ENCODE measurements at regions of chr2 and their contacts with region 1.

Region 1: DNA sequence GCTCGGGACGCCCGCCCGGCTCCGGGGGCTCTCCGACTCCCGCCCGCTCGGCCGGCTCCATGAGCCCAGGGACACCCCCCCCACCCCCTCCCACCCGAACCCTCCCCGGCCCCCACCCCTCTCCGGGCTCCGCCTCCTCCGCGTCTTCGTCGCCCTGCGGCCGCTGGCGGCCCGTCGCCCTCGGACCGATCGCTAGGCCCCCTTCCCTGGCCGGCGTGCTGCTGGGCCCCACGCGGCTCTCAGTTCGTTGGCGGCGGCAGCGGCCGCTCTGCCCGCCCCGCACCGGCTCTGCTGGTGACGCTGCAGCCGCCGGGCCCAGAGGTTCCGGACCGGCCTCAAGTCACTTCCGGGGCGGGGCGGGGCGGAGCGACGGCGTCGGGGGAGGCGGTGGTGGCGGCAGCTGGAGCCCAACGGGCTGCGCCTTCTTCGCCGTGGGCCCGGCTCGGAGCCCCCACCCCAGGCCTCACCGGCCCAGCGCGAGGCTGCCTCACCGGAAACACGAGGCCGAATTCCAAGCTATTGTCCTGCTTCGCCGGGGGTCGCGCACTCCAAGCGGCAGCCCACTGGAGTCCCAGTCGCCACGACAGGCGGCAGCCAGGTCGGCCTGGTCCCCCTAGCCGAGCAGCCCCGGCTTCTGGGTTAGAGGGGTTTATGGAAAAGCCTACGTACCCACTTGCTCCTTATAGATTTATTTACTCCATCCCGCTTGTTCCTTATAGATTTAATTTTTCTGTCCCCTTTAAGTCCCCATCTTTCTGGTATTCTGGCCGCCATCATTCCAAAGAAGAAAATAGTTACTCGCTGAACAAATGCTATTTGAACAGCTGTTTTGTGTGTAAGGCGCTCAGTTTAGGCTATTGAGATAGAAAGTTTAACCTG is at the start of gene PSME4:
- DNase-seq: peak; percentile 88 to 97 (median 93)
- ATAC-seq: peak; percentile 90
- H3K4me3 ChIP-seq: peak within 1 kb of the TSS; percentile 78 to 99
- H3K4me3 Mint-ChIP-seq: peak within 1 kb of the TSS; percentile 95
- H3K27ac ChIP-seq: peak within 1 kb of the TSS; percentile 83 to 92
- H3K27ac Mint-ChIP-seq: peak within 1 kb of the TSS; percentile 98
- H3K4me1 ChIP-seq: peaks cover 25% of the 10 kb centered on the region
- H3K4me1 Mint-ChIP-seq: peaks cover 56% of the 10 kb centered on the region
- H3K27me3 ChIP-seq: no peaks in the 10 kb centered on the region
- H3K27me3 Mint-ChIP-seq: no peaks in the 10 kb centered on the region
- CTCF ChIP-seq: no peak
- total RNA-seq, gene PSME4: 98.8 to 107 TPM

Region 2: DNA sequence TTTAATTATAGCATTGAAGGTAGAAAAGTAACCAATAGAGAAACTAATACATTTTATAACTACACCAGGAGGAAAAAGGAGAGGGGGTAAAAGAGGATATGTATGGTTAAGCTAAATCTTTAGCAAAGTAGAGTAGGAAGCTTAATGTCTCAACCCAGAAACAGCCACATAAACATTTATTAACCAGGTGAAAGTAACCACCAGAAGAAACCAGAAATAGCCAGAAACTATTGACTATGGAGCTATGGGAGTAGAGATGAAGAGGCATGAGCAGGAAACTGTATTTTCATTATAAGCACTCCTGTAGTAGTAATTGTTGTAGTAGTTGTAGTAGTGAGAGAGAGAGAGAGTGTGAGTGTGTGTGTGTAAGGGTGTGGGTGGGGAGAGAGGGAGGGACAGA is 820.8 kb before region 1 on chr2:
- CTCF ChIA-PET with region 1: no interaction called
- POLR2A ChIA-PET with region 1: no interaction called
- intact Hi-C with region 1: no loop called
- DNase-seq: no peak
- ATAC-seq: no peak
- H3K4me3 ChIP-seq: no peak overlapping the region
- H3K4me3 Mint-ChIP-seq: no peak overlapping the region
- H3K27ac ChIP-seq: no peak overlapping the region
- H3K27ac Mint-ChIP-seq: no peak overlapping the region
- H3K4me1 ChIP-seq: no peaks in the 10 kb centered on the region
- H3K4me1 Mint-ChIP-seq: no peaks in the 10 kb centered on the region
- H3K27me3 ChIP-seq: no peaks in the 10 kb centered on the region
- H3K27me3 Mint-ChIP-seq: no peaks in the 10 kb centered on the region
- CTCF ChIP-seq: no peak

Region 3: GRCh38 chr2:53767405-53768241 is 203.3 kb before region 1 on chr2 and contains the start of gene CHAC2:
- CTCF ChIA-PET with region 1: no interaction called
- POLR2A ChIA-PET with region 1: interaction called, 3 read pairs
- intact Hi-C with region 1: loop called in 1 of 2 experiments (anchors 5 kb)
- DNase-seq: peak; percentile 50 to 92 (median 84)
- ATAC-seq: peak; percentile 87
- H3K4me3 ChIP-seq: peak within 1 kb of the TSS; percentile 71 to 96
- H3K4me3 Mint-ChIP-seq: peak within 1 kb of the TSS; percentile 92
- H3K27ac ChIP-seq: peak within 1 kb of the TSS; percentile 70 to 86
- H3K27ac Mint-ChIP-seq: peak within 1 kb of the TSS; percentile 93
- H3K4me1 ChIP-seq: peaks cover 9% of the 10 kb centered on the region
- H3K4me1 Mint-ChIP-seq: peaks cover 29% of the 10 kb centered on the region
- H3K27me3 ChIP-seq: no peaks in the 10 kb centered on the region
- H3K27me3 Mint-ChIP-seq: no peaks in the 10 kb centered on the region
- CTCF ChIP-seq: peak; percentile 31
- total RNA-seq, gene CHAC2: 0.87 to 1.0 TPM

Region 4: GRCh38 chr2:53786705-53787612 is 184.0 kb before region 1 on chr2 and contains the starts of genes ASB3 and ERLEC1:
- CTCF ChIA-PET with region 1: no interaction called
- POLR2A ChIA-PET with region 1: no interaction called
- intact Hi-C with region 1: loop called (anchors 5 to 10 kb)
- DNase-seq: peak; percentile 78 to 95 (median 90)
- ATAC-seq: peak; percentile 88
- H3K4me3 ChIP-seq: peak within 1 kb of the TSS; percentile 94 to 96
- H3K4me3 Mint-ChIP-seq: peak within 1 kb of the TSS; percentile 95
- H3K27ac ChIP-seq: peak within 1 kb of the TSS; percentile 88 to 89
- H3K27ac Mint-ChIP-seq: peak within 1 kb of the TSS; percentile 95
- H3K4me1 ChIP-seq: peaks cover 30% of the 10 kb centered on the region
- H3K4me1 Mint-ChIP-seq: peaks cover 63% of the 10 kb centered on the region
- H3K27me3 ChIP-seq: no peaks in the 10 kb centered on the region
- H3K27me3 Mint-ChIP-seq: no peaks in the 10 kb centered on the region
- CTCF ChIP-seq: no peak
- total RNA-seq, gene ASB3: 25.0 to 26.2 TPM
- total RNA-seq, gene ERLEC1: 24.1 to 27.1 TPM

Region 5: DNA sequence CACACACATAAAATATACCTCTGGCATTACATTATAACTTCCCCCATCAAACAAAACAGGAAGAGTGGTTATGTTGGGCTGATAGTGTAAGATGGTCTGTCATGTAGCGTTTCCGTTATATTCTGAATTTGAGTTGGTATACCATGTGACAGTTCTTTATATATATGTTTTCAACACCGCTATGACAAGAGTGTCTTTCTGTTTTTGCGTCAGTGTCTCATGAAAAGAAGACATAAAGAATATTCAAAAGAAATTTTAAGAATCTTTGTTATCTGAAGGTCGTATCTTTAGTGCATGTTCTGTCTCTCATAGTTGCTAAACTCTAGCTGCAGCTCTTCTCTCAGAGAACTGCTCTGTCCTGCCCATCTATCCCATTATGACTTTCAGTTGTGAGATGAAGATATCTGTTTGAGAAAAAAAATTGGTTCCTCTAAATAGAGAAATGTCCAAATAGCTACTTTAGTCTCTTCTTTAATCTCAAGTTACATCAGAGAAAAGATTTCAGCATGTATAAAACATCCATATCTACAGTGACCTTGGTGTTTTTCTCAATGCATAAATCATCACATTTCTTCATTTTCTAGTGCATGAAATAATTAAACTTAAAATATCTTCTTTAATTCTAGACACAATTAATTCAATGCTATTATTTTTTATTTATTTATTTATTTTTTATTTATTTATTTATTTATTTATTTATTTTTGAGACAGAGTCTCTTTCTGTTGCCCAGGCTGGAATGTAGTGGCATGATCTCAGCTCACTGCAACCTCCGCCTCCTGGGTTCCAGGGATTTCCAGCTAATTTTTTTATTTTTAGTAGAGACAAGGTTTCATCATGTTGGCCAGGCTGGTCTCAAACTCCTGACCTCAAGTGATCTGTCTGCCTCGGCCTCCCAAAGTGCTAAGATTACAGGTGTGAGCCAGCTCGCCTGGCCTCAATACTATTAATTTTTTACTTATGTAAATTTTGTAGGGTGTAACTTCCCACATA is 24.1 kb after region 1 on chr2:
- CTCF ChIA-PET with region 1: no interaction called
- POLR2A ChIA-PET with region 1: interaction called, 12 read pairs
- intact Hi-C with region 1: loop called (anchors 1 kb)
- DNase-seq: peak in 2 of 9 experiments; percentile 77 to 89
- ATAC-seq: peak; percentile 90
- H3K4me3 ChIP-seq: peak overlapping the region; percentile 19 to 44
- H3K4me3 Mint-ChIP-seq: peak overlapping the region; percentile 75
- H3K27ac ChIP-seq: peak overlapping the region; percentile 76 to 91
- H3K27ac Mint-ChIP-seq: peak overlapping the region; percentile 93
- H3K4me1 ChIP-seq: peaks cover 47% of the 10 kb centered on the region
- H3K4me1 Mint-ChIP-seq: peaks cover 33% of the 10 kb centered on the region
- H3K27me3 ChIP-seq: no peaks in the 10 kb centered on the region
- H3K27me3 Mint-ChIP-seq: no peaks in the 10 kb centered on the region
- CTCF ChIP-seq: no peak

Region 6: DNA sequence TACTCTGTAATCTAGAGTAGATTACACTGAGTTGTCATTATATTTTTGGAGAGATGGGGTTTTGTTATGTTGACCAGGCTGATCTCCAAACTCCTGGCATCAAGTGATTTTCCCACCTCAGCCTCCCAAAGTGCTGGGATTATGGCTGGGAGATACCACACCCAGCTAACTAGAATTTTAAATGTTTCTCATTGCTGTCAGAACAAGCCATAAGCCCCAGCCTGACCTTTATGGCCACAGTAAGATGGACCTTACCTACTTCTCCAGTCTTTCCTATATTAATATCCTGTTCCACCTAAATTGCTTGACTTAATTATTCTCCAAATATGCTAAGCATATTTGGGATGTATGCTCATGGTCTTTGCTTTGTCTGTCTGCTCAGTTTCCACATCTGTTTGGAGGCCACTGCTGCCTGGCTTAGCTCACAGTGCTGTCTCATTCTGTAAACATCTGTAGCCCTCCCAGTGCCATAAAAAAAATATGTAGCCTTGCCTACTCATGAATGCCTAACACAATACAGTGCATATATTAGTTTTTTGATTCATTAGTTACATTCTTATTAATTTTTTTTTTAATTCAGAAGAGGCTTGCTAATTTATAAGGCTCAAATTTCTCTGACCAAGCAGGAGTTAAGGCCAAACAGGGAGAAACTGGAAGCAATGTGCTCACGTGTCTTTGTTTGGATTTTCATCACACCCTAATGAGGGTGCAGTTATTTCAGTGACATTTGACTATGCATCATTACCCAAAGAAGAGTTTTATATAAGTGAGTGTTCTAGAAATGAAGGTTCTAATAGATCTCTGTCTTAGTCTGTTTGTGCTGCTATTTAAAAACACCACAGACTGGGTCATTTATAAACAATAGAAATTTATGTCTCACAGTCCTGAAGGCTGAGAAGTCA is 45.1 kb after region 1 on chr2:
- CTCF ChIA-PET with region 1: interaction called, 3 read pairs
- POLR2A ChIA-PET with region 1: interaction called, 3 read pairs
- intact Hi-C with region 1: loop called in 1 of 2 experiments (anchors 5 kb)
- DNase-seq: no peak
- ATAC-seq: no peak
- H3K4me3 ChIP-seq: no peak overlapping the region
- H3K4me3 Mint-ChIP-seq: no peak overlapping the region
- H3K27ac ChIP-seq: no peak overlapping the region
- H3K27ac Mint-ChIP-seq: peak overlapping the region; percentile 52
- H3K4me1 ChIP-seq: peaks cover 28% of the 10 kb centered on the region
- H3K4me1 Mint-ChIP-seq: peaks cover 37% of the 10 kb centered on the region
- H3K27me3 ChIP-seq: no peaks in the 10 kb centered on the region
- H3K27me3 Mint-ChIP-seq: no peaks in the 10 kb centered on the region
- CTCF ChIP-seq: no peak

Region 7: DNA sequence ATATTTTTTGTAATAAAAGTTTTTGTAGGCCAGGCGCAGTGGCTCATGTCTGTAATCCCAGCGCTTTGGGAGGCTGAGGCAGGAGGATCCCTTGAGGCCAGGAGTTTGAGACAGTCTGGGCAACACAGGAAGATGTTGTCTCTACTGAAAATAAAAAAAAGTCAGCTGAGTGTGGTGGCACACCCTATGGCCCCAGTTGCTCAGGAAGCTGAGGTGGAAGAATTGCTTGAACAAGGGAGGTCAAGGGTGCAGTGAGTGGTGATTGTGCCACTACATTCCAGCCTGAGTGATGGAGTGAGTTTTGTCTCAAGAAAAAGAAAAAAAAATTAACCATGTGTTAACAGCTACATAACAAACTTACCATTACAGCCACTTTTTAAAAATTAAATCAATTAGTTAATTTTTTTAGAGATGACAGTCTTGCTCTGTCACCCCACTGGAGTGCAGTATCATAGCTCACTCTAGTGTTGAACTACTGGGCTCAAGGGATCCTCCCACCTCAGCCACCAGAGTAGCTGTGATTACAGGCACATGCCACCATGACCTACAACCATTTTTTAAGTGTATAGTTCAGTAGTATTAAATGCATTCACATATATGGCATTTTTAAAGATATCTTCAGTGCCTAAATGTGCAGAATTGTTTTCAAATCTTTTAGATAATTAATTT is 77.3 kb after region 1 on chr2:
- CTCF ChIA-PET with region 1: interaction called, 4 read pairs
- POLR2A ChIA-PET with region 1: interaction called, 4 read pairs
- intact Hi-C with region 1: loop called in 1 of 2 experiments (anchors 5 kb)
- DNase-seq: peak in 4 of 9 experiments; percentile 6 to 53 (median 32)
- ATAC-seq: peak; percentile 79
- H3K4me3 ChIP-seq: no peak overlapping the region
- H3K4me3 Mint-ChIP-seq: no peak overlapping the region
- H3K27ac ChIP-seq: no peak overlapping the region
- H3K27ac Mint-ChIP-seq: no peak overlapping the region
- H3K4me1 ChIP-seq: peaks cover 12% of the 10 kb centered on the region
- H3K4me1 Mint-ChIP-seq: peaks cover 12% of the 10 kb centered on the region
- H3K27me3 ChIP-seq: no peaks in the 10 kb centered on the region
- H3K27me3 Mint-ChIP-seq: no peaks in the 10 kb centered on the region
- CTCF ChIP-seq: no peak

Region 8: GRCh38 chr2:54570925-54571694 is 600.1 kb after region 1 on chr2:
- CTCF ChIA-PET with region 1: no interaction called
- POLR2A ChIA-PET with region 1: no interaction called
- intact Hi-C with region 1: loop called in 1 of 2 experiments (anchors 10 kb)
- DNase-seq: peak; percentile 23 to 87 (median 69)
- ATAC-seq: peak; percentile 8
- H3K4me3 ChIP-seq: peak overlapping the region; percentile 13 to 21
- H3K4me3 Mint-ChIP-seq: peak overlapping the region; percentile 81
- H3K27ac ChIP-seq: peak overlapping the region; percentile 87 to 94
- H3K27ac Mint-ChIP-seq: peak overlapping the region; percentile 100
- H3K4me1 ChIP-seq: peaks cover 94% of the 10 kb centered on the region
- H3K4me1 Mint-ChIP-seq: peaks cover 95% of the 10 kb centered on the region
- H3K27me3 ChIP-seq: no peaks in the 10 kb centered on the region
- H3K27me3 Mint-ChIP-seq: no peaks in the 10 kb centered on the region
- CTCF ChIP-seq: no peak